Spleen (tissue), 13 donors: ENCODE measurements at regions of chr22 and their contacts with region 1.

Region 1: GRCh38 chr22:40346178-40347118 is at the start of gene ADSL:
- DNase-seq: peak; percentile 97
- H3K4me3 ChIP-seq: peak within 1 kb of the TSS; percentile 71 to 96 (median 85)
- H3K27ac ChIP-seq: peak within 1 kb of the TSS; percentile 79 to 94 (median 91)
- H3K4me1 ChIP-seq: peaks cover 22 to 71% (median 33%) of the 10 kb centered on the region in 6 donors
- H3K27me3 ChIP-seq: no peaks in the 10 kb centered on the region
- CTCF ChIP-seq: peak in 5 of 11 experiments; percentile 26 to 50 (median 41)
- POLR2A ChIP-seq: peak; percentile 24 to 77 (median 59)
- total RNA-seq, gene ADSL: 40.4 to 77.7 (median 55.0) TPM

Region 2: GRCh38 chr22:39532215-39533071 is 814.0 kb before region 1 on chr22 and contains the start of gene RPS19BP1:
- intact Hi-C with region 1: loop called (anchors 5 kb)
- DNase-seq: peak; percentile 100
- H3K4me3 ChIP-seq: peak within 1 kb of the TSS; percentile 59 to 87 (median 72)
- H3K27ac ChIP-seq: peak within 1 kb of the TSS; percentile 81 to 99 (median 93)
- H3K4me1 ChIP-seq: peaks cover 51 to 75% (median 66%) of the 10 kb centered on the region in 6 donors
- H3K27me3 ChIP-seq: no peaks in the 10 kb centered on the region
- CTCF ChIP-seq: peak in 4 of 11 experiments; percentile 3 to 25 (median 19)
- POLR2A ChIP-seq: peak in 1 of 3 donors; percentile 72
- total RNA-seq, gene RPS19BP1: 55.8 to 147 (median 57.3) TPM

Region 3: DNA sequence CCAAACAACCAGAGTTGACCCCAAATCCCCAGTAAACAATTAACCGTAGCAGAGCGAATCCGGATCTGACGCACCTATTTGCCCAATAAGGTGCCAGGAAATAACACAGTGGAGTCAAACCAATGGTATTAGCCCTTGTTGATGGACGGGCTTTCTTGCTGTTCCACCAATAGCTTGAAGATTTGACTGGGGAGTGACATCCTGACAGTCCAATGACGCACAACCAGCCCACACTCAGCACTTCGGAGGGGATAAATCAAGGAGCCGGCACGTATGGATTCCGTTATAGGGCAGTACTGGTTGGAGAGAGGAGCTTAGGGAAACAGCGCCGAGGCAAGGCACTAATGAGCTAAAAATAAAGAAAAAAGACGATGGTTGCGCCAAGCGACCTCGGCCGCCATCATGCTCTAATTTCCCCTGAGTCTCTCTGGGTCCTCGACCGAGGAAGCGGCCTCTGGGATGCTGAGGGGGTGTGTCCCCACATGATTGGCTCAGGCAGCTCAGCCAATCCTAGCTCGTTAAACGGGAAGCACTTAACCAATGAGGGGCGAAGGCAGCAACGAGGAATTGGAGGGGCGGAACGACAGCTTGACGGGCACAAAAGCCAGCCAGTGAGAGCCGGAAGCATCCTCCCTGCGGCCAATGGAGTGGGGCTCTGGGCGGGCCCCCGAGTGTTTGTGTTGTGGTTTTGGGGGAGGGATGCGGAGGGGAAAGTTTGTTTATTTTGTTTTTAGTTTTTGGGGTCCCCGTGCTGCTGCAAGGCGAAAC is 302.2 kb before region 1 on chr22:
- intact Hi-C with region 1: loop called (anchors 10 kb)
- DNase-seq: peak; percentile 96
- H3K4me3 ChIP-seq: peak overlapping the region; percentile 71 to 89 (median 83)
- H3K27ac ChIP-seq: peak overlapping the region; percentile 97 to 100 (median 98)
- H3K4me1 ChIP-seq: peaks cover 30 to 81% (median 53%) of the 10 kb centered on the region in 6 donors
- H3K27me3 ChIP-seq: peaks cover 0 to 15% (median 0%) of the 10 kb centered on the region in 7 donors
- CTCF ChIP-seq: peak in 3 of 11 experiments; percentile 9 to 38 (median 30)
- POLR2A ChIP-seq: peak in 1 of 3 donors; percentile 69

Region 4: DNA sequence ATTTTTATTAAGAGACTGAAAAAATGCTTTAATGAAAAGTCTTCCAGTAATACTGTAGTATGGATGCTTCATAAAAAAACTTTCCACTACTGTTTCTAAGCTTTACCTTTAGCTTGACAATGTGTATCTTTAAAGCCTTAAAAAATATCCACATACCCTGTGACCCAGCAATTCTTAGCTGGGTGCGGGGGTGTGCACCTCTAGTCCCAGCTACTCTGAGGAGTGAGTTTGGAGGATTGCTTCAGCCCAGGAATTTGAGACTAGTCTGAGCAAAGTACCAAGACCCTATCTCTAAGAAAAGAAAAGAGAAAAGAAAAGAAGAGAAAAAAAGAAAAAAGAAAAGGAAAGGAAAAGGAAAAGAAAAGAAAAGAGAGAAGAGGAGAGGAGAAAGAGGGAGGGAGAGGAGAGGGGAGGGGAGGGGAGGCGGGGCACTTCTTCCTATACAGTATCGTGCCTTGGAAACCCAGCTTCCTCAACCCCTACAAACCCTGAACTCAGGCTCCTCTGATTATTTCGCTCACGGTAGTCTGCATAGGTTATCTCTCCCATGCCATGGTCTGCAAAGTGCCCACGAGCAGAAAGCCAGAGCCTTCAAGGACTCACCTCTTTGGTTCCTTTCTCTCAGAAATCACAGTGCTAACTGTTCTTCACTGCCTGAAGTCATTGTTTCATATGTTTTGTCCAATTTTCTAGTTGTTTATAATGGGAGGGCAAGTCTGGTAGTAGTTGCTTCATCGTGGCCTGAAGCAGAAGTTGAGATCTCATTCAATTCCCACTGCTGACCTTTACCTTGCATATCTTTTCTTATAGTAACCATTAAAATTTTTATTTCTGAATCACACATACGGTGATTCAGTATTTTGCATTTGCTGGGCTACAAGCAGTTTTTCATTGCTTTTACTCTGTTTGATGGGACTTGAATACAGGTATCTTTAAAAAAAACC is 269.5 kb before region 1 on chr22:
- intact Hi-C with region 1: no loop called
- DNase-seq: no peak
- H3K4me3 ChIP-seq: no peak overlapping the region
- H3K27ac ChIP-seq: peak overlapping the region in 3 of 8 donors; percentile 27 to 36 (median 32)
- H3K4me1 ChIP-seq: peaks cover 11 to 100% (median 53%) of the 10 kb centered on the region in 6 donors
- H3K27me3 ChIP-seq: no peaks in the 10 kb centered on the region
- CTCF ChIP-seq: no peak
- POLR2A ChIP-seq: no peak

Region 5: DNA sequence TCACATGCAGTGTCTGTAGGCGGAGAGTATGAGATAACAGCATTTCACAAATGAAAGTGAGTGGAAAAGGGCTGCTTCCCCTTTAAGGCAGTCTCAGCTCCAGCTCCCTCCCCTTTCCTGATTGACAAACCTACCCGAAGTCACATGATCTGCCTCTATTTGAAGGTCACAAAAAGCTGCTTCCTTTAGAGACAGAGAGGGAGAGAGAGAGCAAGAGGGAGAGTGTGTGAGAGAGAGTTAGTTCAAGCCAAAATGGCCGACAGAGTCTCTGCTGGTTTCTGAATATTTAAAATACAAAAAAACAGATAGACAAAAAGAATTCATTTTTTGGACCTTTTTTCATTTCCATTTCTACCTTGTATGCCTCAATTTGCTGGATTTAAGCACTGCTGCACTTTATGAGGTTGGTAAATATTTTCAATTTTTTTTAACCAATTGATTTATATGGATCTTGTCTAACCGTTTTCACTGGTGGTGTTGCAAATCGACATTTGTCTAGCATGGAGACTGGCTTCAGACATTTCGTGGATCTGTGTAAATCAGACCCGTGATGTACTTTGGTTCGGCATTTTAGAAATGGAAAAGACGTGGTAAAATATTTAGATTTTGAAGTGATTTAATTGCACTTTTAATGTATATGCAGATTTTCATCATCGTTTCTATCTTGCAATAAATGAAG is 168.6 kb before region 1 on chr22 and contains the start of gene TNRC6B:
- intact Hi-C with region 1: loop called (anchors 10 kb)
- DNase-seq: peak; percentile 76
- H3K4me3 ChIP-seq: peak within 1 kb of the TSS; percentile 52 to 86 (median 64)
- H3K27ac ChIP-seq: peak within 1 kb of the TSS; percentile 63 to 89 (median 85)
- H3K4me1 ChIP-seq: peaks cover 29 to 78% (median 64%) of the 10 kb centered on the region in 6 donors
- H3K27me3 ChIP-seq: no peaks in the 10 kb centered on the region
- CTCF ChIP-seq: peak in 2 of 11 experiments; percentile 8 to 24
- POLR2A ChIP-seq: peak; percentile 77 to 99 (median 96)
- total RNA-seq, gene TNRC6B: 85.1 to 221 (median 103) TPM

Region 6: DNA sequence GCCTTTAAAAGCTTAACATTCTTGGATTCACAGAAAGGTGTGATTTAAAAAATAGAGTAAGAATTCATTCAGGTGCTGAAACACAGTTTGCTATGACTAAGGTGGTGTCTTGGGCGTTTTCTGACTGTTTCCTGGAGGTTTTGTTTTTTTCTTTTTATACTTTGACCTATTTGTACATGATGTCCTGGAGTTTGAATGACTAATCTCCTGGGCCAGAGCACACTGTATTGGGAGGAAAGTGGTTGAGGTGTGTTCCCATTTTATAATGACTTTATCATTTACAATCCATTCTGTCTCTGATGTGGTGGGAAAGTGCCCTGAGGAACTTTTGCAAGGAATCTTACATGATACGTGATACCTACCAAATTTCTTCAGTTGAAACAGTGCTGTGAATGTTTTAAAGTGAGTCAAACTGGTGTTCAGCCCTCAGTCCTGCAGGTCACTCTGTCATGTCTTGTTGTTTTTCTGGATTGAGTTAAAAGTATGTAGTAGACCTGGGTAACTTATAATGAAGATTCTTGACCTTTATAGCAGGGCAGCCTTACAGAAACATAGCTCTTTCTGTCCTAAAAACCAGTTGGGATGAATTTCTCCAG is 87.9 kb before region 1 on chr22:
- intact Hi-C with region 1: no loop called
- DNase-seq: no peak
- H3K4me3 ChIP-seq: no peak overlapping the region
- H3K27ac ChIP-seq: peak overlapping the region in 6 of 8 donors; percentile 7 to 70 (median 39)
- H3K4me1 ChIP-seq: peaks cover 4 to 64% (median 30%) of the 10 kb centered on the region in 6 donors
- H3K27me3 ChIP-seq: no peaks in the 10 kb centered on the region
- CTCF ChIP-seq: no peak
- POLR2A ChIP-seq: no peak

Region 7: DNA sequence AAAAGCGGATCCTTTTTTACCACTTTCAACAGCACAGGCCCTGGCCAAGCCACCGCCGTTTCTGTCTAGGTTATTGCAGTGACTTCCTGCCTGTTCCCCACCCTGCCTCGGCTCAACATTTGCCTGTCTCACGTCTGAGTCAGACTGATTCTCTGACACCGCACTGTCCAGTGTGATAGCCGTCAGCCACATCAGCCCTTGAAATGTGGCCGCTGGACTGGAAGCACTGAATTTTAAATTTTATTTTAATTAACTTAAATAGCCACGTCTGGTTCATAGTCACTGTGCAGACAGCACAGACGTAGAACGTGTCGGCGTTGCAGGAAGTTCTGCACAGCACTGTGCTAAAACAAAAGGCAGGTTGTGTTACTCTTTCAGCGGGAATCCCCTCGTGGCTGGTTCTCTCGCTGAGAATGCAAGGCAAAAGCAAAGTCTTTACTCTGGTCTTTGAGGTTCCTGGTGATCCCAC is 56.4 kb before region 1 on chr22:
- intact Hi-C with region 1: loop called (anchors 10 kb)
- DNase-seq: peak; percentile 86
- H3K4me3 ChIP-seq: peak overlapping the region in 1 of 8 donors; percentile 31
- H3K27ac ChIP-seq: peak overlapping the region; percentile 65 to 84 (median 74)
- H3K4me1 ChIP-seq: peaks cover 0 to 35% (median 19%) of the 10 kb centered on the region in 6 donors
- H3K27me3 ChIP-seq: no peaks in the 10 kb centered on the region
- CTCF ChIP-seq: no peak
- POLR2A ChIP-seq: no peak

Region 8: GRCh38 chr22:40525249-40525884 is 178.9 kb after region 1 on chr22:
- intact Hi-C with region 1: no loop called
- DNase-seq: peak; percentile 85
- H3K4me3 ChIP-seq: no peak overlapping the region
- H3K27ac ChIP-seq: no peak overlapping the region
- H3K4me1 ChIP-seq: peaks cover 0 to 43% (median 16%) of the 10 kb centered on the region in 6 donors
- H3K27me3 ChIP-seq: no peaks in the 10 kb centered on the region
- CTCF ChIP-seq: peak; percentile 51 to 89 (median 71)
- POLR2A ChIP-seq: no peak